Activated CD4-positive, alpha-beta T cell treated with anti-CD3 and anti-CD28 coated beads for 36 hours (primary cell): ENCODE measurements at regions of chr3 and their contacts with region 1.

Region 1: GRCh38 chr3:56556908-56557830 is at the start of gene CCDC66:
- DNase-seq: peak; percentile 97
- ATAC-seq: peak; percentile 97
- H3K4me3 Mint-ChIP-seq: peak within 1 kb of the TSS; percentile 93
- H3K27ac Mint-ChIP-seq: peak within 1 kb of the TSS; percentile 99
- H3K4me1 Mint-ChIP-seq: peaks cover 20% of the 10 kb centered on the region
- H3K27me3 Mint-ChIP-seq: no peaks in the 10 kb centered on the region
- total RNA-seq, gene CCDC66: 23.5 to 28.5 TPM

Region 2: GRCh38 chr3:56593455-56594158 is 36.4 kb after region 1 on chr3:
- CTCF ChIA-PET with region 1: interaction called, 6 read pairs
- POLR2A ChIA-PET with region 1: no interaction called
- intact Hi-C with region 1: loop called in 1 of 2 experiments (anchors 5 kb)
- DNase-seq: peak; percentile 60
- ATAC-seq: peak; percentile 99
- H3K4me3 Mint-ChIP-seq: peak overlapping the region; percentile 18
- H3K27ac Mint-ChIP-seq: peak overlapping the region; percentile 55
- H3K4me1 Mint-ChIP-seq: peaks cover 66% of the 10 kb centered on the region
- H3K27me3 Mint-ChIP-seq: no peaks in the 10 kb centered on the region

Region 3: DNA sequence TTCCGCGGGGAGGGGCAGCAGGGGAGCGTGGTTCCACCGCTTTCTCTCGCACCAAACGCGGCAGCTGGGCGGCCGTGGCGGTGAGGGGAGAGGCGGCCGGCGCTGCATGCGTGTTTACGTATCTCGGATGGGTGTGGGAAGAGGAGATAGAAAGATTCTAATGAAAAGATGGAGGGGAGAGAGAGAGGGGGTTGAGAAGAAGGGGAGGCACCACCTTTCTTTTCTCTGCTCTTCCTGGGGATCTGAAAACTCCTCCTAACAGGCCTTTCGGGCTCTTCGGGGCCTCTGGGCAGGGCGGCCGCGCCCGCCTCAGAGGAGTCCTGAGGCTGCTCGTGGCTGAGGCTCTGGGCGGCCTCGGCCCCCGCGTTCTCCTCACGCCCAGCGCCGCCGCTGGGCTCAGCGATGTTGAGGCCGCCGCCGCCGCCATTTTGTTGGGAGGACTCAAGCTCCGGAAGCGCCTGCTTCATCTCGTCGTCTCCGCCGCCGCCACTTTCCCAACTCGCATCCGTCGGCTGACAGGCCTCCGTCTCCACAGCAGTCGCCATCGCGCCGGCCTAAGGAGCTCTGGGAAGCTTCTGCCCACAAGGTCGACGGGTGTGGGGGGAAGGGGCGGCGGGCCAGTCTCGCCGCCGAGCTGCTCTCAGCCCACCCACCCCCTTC is 125.4 kb after region 1 on chr3:
- CTCF ChIA-PET with region 1: interaction called, 3 read pairs
- POLR2A ChIA-PET with region 1: interaction called, 3 read pairs
- intact Hi-C with region 1: loop called (anchors 1 to 5 kb)
- DNase-seq: peak; percentile 88
- ATAC-seq: peak; percentile 78
- H3K4me3 Mint-ChIP-seq: peak overlapping the region; percentile 92
- H3K27ac Mint-ChIP-seq: peak overlapping the region; percentile 94
- H3K4me1 Mint-ChIP-seq: peaks cover 38% of the 10 kb centered on the region
- H3K27me3 Mint-ChIP-seq: no peaks in the 10 kb centered on the region